Posterior vena cava (tissue), 2 donors: ENCODE measurements at regions of chr6 and their contacts with region 1.

Region 1: DNA sequence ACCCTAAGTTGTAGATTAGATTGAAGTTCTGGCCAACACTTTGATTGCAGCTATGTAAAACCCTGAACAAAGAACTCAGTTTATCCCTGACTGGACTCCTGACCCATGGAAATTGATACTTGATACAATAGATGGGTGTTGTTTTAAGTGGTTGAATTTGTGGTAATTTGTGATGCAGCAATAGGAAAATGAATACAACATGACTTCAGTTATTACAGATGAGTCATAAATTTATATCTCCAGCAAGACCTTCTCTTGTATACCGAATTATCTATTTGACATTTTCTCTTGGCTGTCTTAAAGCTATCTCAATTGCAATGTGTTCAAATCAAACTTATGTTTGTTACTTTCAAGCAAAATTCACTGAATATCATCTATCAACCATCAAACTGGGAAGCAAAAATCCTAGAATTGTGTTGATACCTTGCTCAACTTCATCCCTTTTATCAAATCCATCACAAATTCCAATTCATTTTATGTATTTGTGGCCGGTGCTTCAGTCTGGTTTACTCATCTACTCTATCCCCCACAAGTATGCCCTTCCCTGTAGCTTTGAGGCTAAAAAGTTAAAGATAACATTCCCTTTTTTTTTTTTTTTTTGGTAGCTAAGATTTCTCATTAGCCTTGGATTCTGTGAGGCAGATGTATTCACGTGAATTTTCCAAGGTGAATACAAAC is 129.4 kb upstream of the CENPW start:
- DNase-seq: no peak

Region 2: DNA sequence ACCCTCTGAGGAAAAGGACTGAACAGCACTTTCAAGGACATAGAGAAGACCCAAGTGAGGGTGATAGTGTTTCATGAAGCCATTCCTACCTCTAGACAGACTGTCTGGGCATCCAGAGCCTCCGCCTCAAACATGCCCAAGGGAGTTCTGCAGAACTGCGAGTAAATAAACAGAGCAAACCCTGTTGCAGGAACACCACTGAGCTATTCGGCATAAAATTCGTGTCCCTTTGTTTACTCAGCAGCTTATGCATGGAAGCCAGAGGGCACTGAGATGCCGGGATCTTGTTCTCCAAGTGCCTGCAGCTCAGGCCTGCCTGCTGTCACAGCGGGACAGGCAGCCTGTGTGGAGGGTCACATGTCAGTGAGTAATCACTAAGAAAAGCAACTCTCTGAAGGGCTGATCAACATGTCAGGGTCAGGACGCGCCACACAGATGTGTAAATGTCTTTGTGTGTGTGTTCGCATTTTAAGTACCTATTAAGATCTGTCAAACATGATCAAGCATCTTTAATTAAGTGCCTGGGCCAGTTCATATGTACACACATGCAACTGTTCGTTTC is 626.0 kb before region 1 on chr6:
- intact Hi-C with region 1: loop called in 1 of 2 experiments (anchors 5 kb)
- DNase-seq: no peak

Region 3: DNA sequence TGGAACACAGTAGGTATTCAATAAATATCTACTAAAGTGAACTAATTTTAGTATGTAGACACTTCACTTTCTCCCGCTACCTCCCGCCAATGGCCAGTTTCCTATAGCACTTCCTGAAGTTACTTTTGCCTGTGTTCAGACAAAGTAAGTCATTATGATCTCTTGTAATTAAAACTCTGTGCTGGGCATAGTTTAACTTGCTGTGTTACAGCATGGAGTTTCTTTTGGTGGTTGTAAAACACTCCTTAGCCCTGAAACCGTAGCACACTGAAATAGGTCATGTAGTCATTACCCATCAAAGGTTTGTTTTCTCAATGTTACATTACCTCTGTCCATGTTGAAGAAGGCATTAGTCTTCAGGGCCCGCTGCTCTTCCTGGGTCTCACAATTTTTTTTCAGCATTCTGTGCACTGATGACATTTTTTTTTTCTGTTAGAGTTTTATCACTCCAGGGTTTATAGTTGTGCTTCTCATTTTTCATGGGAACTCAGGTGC is 75.4 kb after region 1 on chr6:
- intact Hi-C with region 1: no loop called
- DNase-seq: no peak